Activated CD4-positive, alpha-beta T cell treated with anti-CD3 and anti-CD28 coated beads, Interleukin-2, amount 10 ng/mL, durations not matched to agents 24 days and 14 days (primary cell): ENCODE measurements at regions of chr11 and their contacts with region 1.

Region 1: GRCh38 chr11:115222218-115222862 is 281.9 kb downstream of the CADM1 start:
- DNase-seq: peak; percentile 80
- H3K4me3 Mint-ChIP-seq: peak overlapping the region; percentile 28
- H3K27ac Mint-ChIP-seq: peak overlapping the region; percentile 72
- H3K4me1 Mint-ChIP-seq: peaks cover 26% of the 10 kb centered on the region
- H3K27me3 Mint-ChIP-seq: peaks cover 29% of the 10 kb centered on the region

Region 2: GRCh38 chr11:115201111-115201792 is 21.1 kb before region 1 on chr11:
- intact Hi-C with region 1: loop called (anchors 2 kb)
- DNase-seq: no peak
- H3K4me3 Mint-ChIP-seq: no peak overlapping the region
- H3K27ac Mint-ChIP-seq: no peak overlapping the region
- H3K4me1 Mint-ChIP-seq: no peaks in the 10 kb centered on the region
- H3K27me3 Mint-ChIP-seq: peaks cover 16% of the 10 kb centered on the region

Region 3: DNA sequence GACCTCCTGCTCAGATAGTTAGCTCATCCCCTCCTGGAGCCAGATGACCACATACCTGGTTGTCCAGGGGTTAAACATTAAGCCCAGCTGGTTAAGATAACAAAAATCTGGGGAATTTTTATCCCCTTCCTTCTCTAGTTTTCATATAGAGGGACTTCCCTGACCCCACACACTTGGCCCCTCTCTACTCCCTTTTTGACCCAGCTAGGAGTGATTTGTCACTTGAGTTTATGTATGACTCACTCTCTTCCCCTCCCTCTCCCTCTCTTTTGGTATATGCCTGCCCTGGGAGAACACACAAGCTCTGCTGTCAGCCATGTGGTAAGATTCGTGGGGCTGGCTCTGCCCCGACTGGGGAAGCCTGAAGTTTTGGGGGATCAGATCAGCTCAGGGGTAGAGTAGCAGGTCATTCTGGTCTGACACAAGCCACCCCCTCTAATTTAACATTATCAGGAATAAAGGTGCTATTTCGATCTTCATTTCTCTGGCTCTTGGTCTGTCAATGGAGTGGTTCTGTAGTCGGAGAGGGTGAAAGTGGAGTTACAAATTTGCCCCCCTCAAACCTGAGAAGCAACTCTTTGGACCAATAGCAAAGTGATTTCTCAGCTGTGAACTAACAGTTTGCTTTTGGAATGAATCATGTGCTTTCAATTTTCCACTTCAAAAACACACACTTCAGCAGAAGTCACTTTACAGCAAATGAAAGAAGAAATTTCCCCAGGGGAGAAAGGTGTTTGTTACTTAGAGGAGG is 697.2 kb after region 1 on chr11:
- intact Hi-C with region 1: loop called (anchors 10 kb)
- DNase-seq: peak; percentile 56
- H3K4me3 Mint-ChIP-seq: peak overlapping the region; percentile 12
- H3K27ac Mint-ChIP-seq: peak overlapping the region; percentile 84
- H3K4me1 Mint-ChIP-seq: peaks cover 8% of the 10 kb centered on the region
- H3K27me3 Mint-ChIP-seq: no peaks in the 10 kb centered on the region